CD4-positive, alpha-beta memory T cell (primary cell): ENCODE measurements at regions of chr6 and their contacts with region 1.

Region 1: GRCh38 chr6:4135665-4136353 is 434 bp upstream of the ECI2 start:
- DNase-seq: peak; percentile 86 to 93 (median 87)
- H3K4me3 ChIP-seq: peak overlapping the region; percentile 43 to 72
- H3K4me3 Mint-ChIP-seq: peak overlapping the region; percentile 83 to 94 (median 88)
- H3K27ac ChIP-seq: peak overlapping the region; percentile 51
- H3K27ac Mint-ChIP-seq: peak overlapping the region; percentile 71 to 93 (median 92)
- H3K4me1 ChIP-seq: peaks cover 28% of the 10 kb centered on the region
- H3K4me1 Mint-ChIP-seq: peaks cover 21 to 50% (median 36%) of the 10 kb centered on the region in 4 donors
- H3K27me3 ChIP-seq: no peaks in the 10 kb centered on the region
- H3K27me3 Mint-ChIP-seq: no peaks in the 10 kb centered on the region

Region 2: DNA sequence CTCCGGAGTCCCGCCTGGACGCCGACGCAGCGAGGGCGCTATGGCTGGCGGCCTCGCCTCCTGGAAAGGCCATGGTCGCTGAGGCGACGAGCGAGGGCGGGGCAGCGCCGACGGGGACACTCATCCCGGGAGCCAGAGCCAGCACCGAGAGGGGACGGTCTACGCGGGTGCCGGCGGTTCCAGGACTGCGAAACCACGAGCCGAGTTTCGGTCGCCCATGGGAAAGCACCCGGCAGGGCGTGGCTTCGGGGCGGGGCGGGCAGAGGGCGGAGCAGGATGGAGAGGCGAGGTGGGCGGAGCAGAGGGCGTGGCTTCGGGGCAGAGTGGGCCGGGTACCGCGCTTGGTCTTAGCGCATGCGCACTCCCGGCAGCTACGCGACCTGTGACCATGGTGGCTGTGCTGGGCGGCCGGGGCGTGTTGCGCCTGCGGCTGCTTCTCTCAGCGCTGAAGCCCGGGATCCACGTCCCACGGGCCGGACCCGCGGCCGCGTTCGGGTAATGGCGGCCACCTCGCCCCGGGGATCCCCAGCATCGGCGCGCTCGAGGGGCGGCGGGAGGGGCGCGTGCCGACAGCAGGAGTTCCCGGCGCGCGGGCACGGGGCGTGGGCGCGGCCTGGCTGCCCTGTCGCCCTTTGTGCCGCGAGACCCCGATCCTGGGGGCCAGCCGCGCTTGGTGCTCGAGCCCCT is 1017.3 kb before region 1 on chr6 and contains the start of gene BPHL:
- CTCF ChIA-PET with region 1: no interaction called
- POLR2A ChIA-PET with region 1: no interaction called
- intact Hi-C with region 1: loop called (anchors 1 kb)
- DNase-seq: peak; percentile 98 to 100 (median 99)
- H3K4me3 ChIP-seq: peak within 1 kb of the TSS; percentile 76 to 94
- H3K4me3 Mint-ChIP-seq: peak within 1 kb of the TSS; percentile 75 to 96 (median 91)
- H3K27ac ChIP-seq: peak within 1 kb of the TSS; percentile 87
- H3K27ac Mint-ChIP-seq: peak within 1 kb of the TSS; percentile 93 to 97 (median 96)
- H3K4me1 ChIP-seq: peaks cover 14% of the 10 kb centered on the region
- H3K4me1 Mint-ChIP-seq: peaks cover 7 to 20% (median 14%) of the 10 kb centered on the region in 4 donors
- H3K27me3 ChIP-seq: no peaks in the 10 kb centered on the region
- H3K27me3 Mint-ChIP-seq: no peaks in the 10 kb centered on the region
- total RNA-seq, gene BPHL: 11.9 to 13.7 TPM

Region 3: GRCh38 chr6:3456755-3457466 is 678.9 kb before region 1 on chr6 and contains the start of gene SLC22A23:
- CTCF ChIA-PET with region 1: no interaction called
- POLR2A ChIA-PET with region 1: no interaction called
- intact Hi-C with region 1: loop called (anchors 5 kb)
- DNase-seq: peak; percentile 74 to 79 (median 76)
- H3K4me3 ChIP-seq: peak within 1 kb of the TSS; percentile 55 to 63
- H3K4me3 Mint-ChIP-seq: peak within 1 kb of the TSS; percentile 81 to 92 (median 88)
- H3K27ac ChIP-seq: peak within 1 kb of the TSS; percentile 37
- H3K27ac Mint-ChIP-seq: peak within 1 kb of the TSS; percentile 62 to 89 (median 80)
- H3K4me1 ChIP-seq: peaks cover 35% of the 10 kb centered on the region
- H3K4me1 Mint-ChIP-seq: peaks cover 6 to 14% (median 9%) of the 10 kb centered on the region in 4 donors
- H3K27me3 ChIP-seq: peaks cover 6% of the 10 kb centered on the region
- H3K27me3 Mint-ChIP-seq: peaks cover 3 to 9% of the 10 kb centered on the region in 2 donors
- total RNA-seq, gene SLC22A23: 7.9 to 12.5 TPM

Region 4: DNA sequence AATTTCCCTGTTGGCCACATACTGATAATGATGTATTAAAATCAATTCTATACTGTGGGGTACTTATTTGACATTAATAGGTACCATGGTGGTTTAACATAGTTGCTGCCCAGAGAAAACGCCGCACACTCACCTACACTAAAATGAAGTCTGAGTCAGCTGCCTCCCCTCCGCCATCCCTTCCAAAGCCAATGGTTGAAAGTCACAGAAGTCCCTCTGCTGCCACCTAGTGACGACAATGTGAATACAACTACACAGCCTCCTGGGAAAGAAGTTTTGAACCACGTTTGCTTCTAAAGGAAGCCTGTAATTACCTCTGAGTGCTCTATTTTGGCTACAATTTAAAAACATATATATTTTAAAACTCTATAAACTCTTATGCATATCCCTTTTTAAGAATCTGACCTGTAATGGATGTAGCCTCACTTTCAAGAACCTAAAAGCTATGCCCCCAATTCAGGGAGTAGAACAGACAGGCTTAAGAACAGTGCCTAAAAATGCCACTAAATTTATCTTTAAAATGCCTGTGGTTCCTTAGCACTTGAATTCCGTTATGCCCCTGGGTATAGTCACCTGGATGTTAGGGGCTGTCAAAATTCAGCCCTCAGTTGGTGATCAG is 20.1 kb after region 1 on chr6:
- CTCF ChIA-PET with region 1: interaction called, 23 read pairs
- POLR2A ChIA-PET with region 1: interaction called, 6 read pairs
- intact Hi-C with region 1: loop called (anchors 1 kb)
- DNase-seq: peak; percentile 69 to 81 (median 73)
- H3K4me3 ChIP-seq: no peak overlapping the region
- H3K4me3 Mint-ChIP-seq: no peak overlapping the region
- H3K27ac ChIP-seq: no peak overlapping the region
- H3K27ac Mint-ChIP-seq: peak overlapping the region in 1 of 7 donors; percentile 25
- H3K4me1 ChIP-seq: no peaks in the 10 kb centered on the region
- H3K4me1 Mint-ChIP-seq: peaks cover 0 to 5% (median 2%) of the 10 kb centered on the region in 4 donors
- H3K27me3 ChIP-seq: no peaks in the 10 kb centered on the region
- H3K27me3 Mint-ChIP-seq: peaks cover 2 to 4% of the 10 kb centered on the region in 2 donors

Region 5: DNA sequence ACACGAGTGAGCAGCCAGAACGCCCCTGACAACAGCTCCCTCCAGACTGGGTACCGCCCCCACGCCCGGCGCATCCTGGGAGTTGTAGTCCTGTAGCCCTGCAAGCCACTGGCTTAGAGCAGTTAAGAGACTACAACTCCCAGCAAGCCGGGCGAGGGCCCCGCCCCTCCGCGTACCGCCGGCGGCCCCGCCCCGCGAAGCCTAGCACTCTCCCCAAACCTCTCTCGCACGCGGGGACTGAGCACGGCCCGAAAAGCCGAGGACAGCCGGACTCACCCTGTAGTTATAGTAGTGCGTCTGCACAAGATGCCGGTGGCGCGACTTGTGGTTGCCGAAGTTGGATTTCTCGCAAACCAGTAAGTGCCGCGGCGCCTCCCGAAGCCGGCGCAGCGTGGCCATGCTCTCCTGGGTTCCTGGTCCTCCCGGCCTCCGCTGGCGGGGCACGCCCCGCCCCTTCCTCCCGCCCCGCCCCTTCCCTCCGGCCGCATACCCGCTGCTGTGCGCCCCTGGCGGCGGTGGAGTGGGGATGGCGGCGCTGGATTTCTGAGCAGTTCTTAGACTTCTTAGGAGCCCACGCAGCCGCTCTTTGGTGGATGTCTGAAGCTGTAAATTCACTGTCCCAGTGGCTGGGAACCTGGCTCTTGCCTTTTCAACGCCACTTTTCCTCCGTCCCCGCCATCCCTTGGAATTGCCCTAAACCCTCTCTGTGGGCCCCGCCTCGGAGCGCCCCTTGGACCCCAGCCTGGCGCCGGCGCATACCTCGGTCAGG is 868.0 kb after region 1 on chr6 and contains the start of gene RPP40:
- CTCF ChIA-PET with region 1: interaction called, 3 read pairs
- POLR2A ChIA-PET with region 1: no interaction called
- intact Hi-C with region 1: loop called (anchors 5 kb)
- DNase-seq: peak; percentile 98 to 99 (median 99)
- H3K4me3 ChIP-seq: peak within 1 kb of the TSS; percentile 33 to 85
- H3K4me3 Mint-ChIP-seq: peak within 1 kb of the TSS; percentile 93 to 97 (median 94)
- H3K27ac ChIP-seq: peak within 1 kb of the TSS; percentile 68
- H3K27ac Mint-ChIP-seq: peak within 1 kb of the TSS; percentile 94 to 97 (median 95)
- H3K4me1 ChIP-seq: peaks cover 10% of the 10 kb centered on the region
- H3K4me1 Mint-ChIP-seq: peaks cover 3 to 17% (median 10%) of the 10 kb centered on the region in 4 donors
- H3K27me3 ChIP-seq: no peaks in the 10 kb centered on the region
- H3K27me3 Mint-ChIP-seq: no peaks in the 10 kb centered on the region
- total RNA-seq, gene RPP40: 5.5 to 6.3 TPM

Region 6: GRCh38 chr6:5174244-5174643 is 1038.4 kb after region 1 on chr6:
- CTCF ChIA-PET with region 1: no interaction called
- POLR2A ChIA-PET with region 1: no interaction called
- intact Hi-C with region 1: no loop called
- DNase-seq: peak; percentile 62 to 74 (median 72)
- H3K4me3 ChIP-seq: peak overlapping the region in 1 of 2 donors; percentile 4
- H3K4me3 Mint-ChIP-seq: peak overlapping the region; percentile 61 to 78 (median 70)
- H3K27ac ChIP-seq: peak overlapping the region; percentile 50
- H3K27ac Mint-ChIP-seq: peak overlapping the region; percentile 60 to 90 (median 82)
- H3K4me1 ChIP-seq: peaks cover 33% of the 10 kb centered on the region
- H3K4me1 Mint-ChIP-seq: peaks cover 30 to 43% (median 37%) of the 10 kb centered on the region in 4 donors
- H3K27me3 ChIP-seq: no peaks in the 10 kb centered on the region
- H3K27me3 Mint-ChIP-seq: no peaks in the 10 kb centered on the region